Right lobe of liver (tissue), 6 donors: ENCODE measurements at regions of chr20 and their contacts with region 1.

Region 1: DNA sequence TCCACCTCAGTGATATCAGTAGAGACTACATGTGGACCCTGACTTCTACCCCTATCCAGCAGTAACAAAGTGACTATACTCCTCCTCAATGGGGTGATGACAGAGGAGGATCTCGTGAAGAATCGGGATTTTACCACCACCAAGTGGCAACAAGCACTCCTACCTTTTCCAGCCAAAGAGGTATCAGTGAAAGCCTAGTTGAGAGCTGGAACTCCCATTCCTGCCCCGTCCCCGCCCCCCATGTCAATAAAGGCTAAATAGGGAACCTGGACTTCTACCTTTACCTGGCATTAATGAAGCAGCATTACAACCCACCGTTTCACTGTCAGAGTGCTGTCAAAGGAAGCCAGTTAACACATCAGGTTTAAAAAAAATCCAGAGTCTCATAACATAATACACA is 45.3 kb downstream of the RNF24 start:
- DNase-seq: peak; percentile 60 to 89 (median 84)
- ATAC-seq: peak; percentile 95 to 98 (median 96)
- H3K4me3 ChIP-seq: no peak overlapping the region
- H3K27ac ChIP-seq: peak overlapping the region in 2 of 3 donors; percentile 24 to 63
- H3K4me1 ChIP-seq: peaks cover 0 to 16% (median 2%) of the 10 kb centered on the region in 4 donors
- H3K27me3 ChIP-seq: no peaks in the 10 kb centered on the region
- CTCF ChIP-seq: peak; percentile 23 to 52 (median 40)
- POLR2A ChIP-seq: no peak

Region 2: DNA sequence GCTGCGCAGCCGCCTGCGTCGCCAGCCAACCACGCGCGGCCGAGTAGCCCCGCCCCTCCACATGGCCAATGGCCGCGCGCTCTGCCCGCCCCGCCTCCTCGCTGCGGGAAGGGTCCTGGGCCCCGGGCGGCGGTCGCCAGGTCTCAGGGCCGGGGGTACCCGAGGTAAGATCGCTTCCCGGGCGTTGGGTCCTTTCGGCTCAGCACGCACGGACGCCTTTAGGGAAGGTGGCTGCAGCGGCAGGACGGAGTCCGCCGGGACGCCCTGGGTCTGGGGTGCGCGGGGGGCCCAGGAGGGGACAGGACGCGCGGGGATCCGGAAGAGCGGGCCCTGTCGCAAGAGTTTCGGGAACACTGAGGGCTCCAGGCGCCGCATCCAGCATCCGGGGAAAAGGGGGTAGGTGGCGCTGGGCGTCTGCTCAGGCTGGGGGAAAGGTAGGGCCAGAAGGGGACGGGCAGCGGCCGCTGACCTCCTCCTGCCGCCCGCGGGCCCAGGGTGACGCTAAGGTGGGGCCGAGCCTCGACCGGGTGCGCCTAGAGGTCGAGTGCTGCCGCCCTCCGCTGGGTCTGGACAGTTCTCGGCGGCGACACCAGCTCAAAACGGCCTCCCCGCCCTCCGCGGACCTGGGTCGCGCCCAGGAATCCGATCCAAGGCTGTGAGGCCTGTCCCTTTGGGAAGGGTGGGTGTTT is 123.1 kb before region 1 on chr20 and contains the start of gene MAVS:
- intact Hi-C with region 1: no loop called
- DNase-seq: peak; percentile 93 to 94 (median 93)
- ATAC-seq: peak; percentile 96 to 98 (median 98)
- H3K4me3 ChIP-seq: peak within 1 kb of the TSS; percentile 70 to 100 (median 81)
- H3K27ac ChIP-seq: peak within 1 kb of the TSS; percentile 90 to 94 (median 93)
- H3K4me1 ChIP-seq: peaks cover 0 to 4% (median 0%) of the 10 kb centered on the region in 4 donors
- H3K27me3 ChIP-seq: no peaks in the 10 kb centered on the region
- CTCF ChIP-seq: peak in 1 of 4 donors; percentile 10
- POLR2A ChIP-seq: peak; percentile 91
- total RNA-seq, gene MAVS: 10.1 to 20.4 (median 17.0) TPM

Region 3: GRCh38 chr20:3871550-3872297 is 98.3 kb before region 1 on chr20:
- intact Hi-C with region 1: no loop called
- DNase-seq: no peak
- ATAC-seq: no peak
- H3K4me3 ChIP-seq: no peak overlapping the region
- H3K27ac ChIP-seq: no peak overlapping the region
- H3K4me1 ChIP-seq: no peaks in the 10 kb centered on the region
- H3K27me3 ChIP-seq: no peaks in the 10 kb centered on the region
- CTCF ChIP-seq: no peak
- POLR2A ChIP-seq: no peak

Region 4: GRCh38 chr20:3927486-3928291 is 42.3 kb before region 1 on chr20:
- intact Hi-C with region 1: loop called in 1 of 2 experiments (anchors 10 kb)
- DNase-seq: no peak
- ATAC-seq: peak; percentile 5 to 22 (median 17)
- H3K4me3 ChIP-seq: no peak overlapping the region
- H3K27ac ChIP-seq: no peak overlapping the region
- H3K4me1 ChIP-seq: peaks cover 0 to 8% (median 3%) of the 10 kb centered on the region in 4 donors
- H3K27me3 ChIP-seq: no peaks in the 10 kb centered on the region
- CTCF ChIP-seq: no peak
- POLR2A ChIP-seq: no peak

Region 5: DNA sequence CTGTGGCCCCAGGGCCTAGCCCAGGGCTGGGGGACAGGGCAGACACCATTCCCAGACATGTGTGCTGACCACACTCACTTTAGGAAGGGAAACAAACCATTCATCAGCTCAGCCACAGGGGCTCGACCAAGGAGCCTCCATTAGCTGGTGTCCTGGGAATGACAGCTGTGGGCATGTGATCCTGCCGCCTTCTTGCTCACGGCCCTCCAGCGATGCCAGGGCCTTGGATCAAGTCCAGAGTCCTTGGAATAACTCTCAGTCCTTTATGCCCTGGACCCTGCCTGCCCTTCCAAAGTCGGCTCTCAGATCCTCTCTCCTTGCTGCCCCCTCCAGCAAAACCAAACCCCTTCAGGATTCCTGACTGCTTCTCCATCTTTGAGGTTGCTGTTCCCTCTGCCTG is 210.3 kb after region 1 on chr20:
- intact Hi-C with region 1: no loop called
- DNase-seq: no peak
- ATAC-seq: no peak
- H3K4me3 ChIP-seq: no peak overlapping the region
- H3K27ac ChIP-seq: no peak overlapping the region
- H3K4me1 ChIP-seq: no peaks in the 10 kb centered on the region
- H3K27me3 ChIP-seq: no peaks in the 10 kb centered on the region
- CTCF ChIP-seq: no peak
- POLR2A ChIP-seq: no peak